ENCODE measurements at regions of chr7 and their contacts with region 1.

Region 1: DNA sequence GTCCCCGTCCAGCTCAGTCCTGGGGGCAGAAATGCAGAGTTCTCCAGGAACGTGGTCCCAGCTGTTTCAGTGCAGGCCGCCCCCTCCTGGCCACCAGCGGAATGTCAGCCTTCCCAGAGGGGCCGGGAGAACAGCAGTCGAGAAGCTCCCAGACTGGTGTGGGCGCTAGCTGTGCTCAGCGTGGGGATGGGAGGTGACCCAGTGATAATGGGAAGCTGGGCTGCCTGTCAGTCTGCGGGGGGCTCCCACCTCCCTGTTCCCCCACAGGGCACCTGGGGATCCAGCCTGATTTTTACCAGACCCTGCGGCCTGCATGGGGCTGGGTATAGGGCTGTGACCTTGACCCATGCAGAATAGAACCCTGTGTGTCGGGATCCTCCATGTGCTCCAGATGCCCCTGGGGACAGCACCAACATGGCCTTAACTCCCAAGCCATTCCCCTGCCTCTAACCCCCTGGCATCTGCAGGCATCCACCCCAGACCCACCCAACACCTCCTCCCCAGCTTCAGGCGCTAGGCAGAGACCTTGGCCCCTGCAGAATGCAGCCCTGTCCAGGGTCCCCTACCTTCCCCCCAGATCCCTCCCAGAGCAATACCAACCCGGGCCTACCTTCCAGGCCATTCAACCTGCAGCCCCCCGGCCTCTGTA is 946 bp upstream of the ELN start:
- DNase-seq: no peak
- H3K4me3 ChIP-seq: no peak overlapping the region
- CTCF ChIP-seq: peak; percentile 97

Region 2: DNA sequence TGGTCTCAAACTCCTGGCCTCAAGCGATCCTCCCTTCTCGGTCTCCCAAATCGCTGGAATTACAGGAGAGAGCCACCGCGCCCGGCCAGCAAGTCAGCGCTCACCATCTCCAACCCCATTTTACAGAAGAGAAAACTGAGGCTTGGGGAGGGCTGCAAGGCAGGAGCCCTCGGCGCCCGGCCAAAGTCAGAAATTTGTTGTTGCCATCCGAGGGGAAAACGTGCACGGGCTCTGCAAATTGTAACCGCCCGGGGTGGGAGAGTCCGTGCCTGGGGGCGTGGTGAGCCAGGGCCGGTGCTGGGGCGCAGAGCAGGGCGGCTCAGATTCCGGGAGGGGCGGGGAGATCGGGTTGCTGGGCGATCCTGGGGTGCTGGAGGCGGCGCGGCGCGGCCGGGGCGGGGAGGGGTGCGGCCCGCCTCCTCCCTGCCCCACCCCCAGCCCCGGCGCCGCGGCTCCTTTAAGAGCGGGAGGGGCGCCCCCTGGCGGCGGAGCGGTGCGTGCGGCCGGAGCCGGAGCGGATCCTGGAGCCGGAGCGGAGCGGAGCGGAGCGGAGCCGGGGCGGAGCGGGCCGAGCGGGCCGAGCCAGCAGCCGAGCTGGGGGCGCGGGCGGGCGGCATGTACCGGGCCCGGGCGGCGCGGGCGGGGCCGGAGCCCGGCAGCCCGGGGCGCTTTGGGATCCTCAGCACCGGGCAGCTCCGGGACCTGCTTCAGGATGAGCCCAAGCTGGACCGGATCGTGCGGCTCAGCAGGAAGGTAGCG is 359.5 kb before region 1 on chr7 and contains the start of gene VPS37D:
- CTCF ChIA-PET with region 1: no interaction called
- POLR2A ChIA-PET with region 1: no interaction called
- DNase-seq: peak; percentile 3
- H3K4me3 ChIP-seq: peak within 1 kb of the TSS; percentile 72
- CTCF ChIP-seq: peak; percentile 84

Region 3: GRCh38 chr7:73865738-73866445 is 161.1 kb before region 1 on chr7:
- CTCF ChIA-PET with region 1: interaction called, 67 read pairs
- POLR2A ChIA-PET with region 1: no interaction called
- DNase-seq: no peak
- H3K4me3 ChIP-seq: no peak overlapping the region
- CTCF ChIP-seq: peak; percentile 74

Region 4: GRCh38 chr7:73885975-73886798 is 140.8 kb before region 1 on chr7:
- CTCF ChIA-PET with region 1: interaction called, 27 read pairs
- POLR2A ChIA-PET with region 1: no interaction called
- DNase-seq: no peak
- H3K4me3 ChIP-seq: no peak overlapping the region
- CTCF ChIP-seq: no peak

Region 5: DNA sequence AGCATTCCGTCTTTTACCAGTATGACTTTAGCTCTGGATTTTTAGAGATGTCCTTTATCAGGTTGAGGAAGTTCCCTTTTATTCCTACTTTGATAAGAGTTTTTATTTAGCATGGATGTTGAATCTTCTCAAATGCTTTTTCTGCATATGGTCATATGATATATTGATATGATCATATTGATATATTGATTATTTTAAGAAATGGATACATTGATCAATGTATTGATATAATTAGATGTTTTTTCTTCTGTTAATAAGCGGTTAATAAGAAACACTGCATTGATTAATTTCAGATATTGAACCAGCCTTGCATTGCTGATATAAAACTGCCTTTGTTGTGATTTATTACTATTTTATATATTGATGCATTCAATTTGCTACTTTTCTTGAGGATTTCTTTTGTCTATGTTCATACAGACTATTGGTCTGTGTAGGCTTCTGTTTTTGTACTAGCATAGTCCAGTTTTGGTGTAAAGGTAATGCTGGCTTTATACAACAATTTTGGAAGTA is 78.8 kb before region 1 on chr7:
- CTCF ChIA-PET with region 1: no interaction called
- POLR2A ChIA-PET with region 1: no interaction called
- DNase-seq: no peak
- H3K4me3 ChIP-seq: no peak overlapping the region
- CTCF ChIP-seq: no peak

Region 6: GRCh38 chr7:73999615-74000420 is 27.2 kb before region 1 on chr7:
- CTCF ChIA-PET with region 1: interaction called, 24 read pairs
- POLR2A ChIA-PET with region 1: no interaction called
- DNase-seq: peak; percentile 86
- H3K4me3 ChIP-seq: no peak overlapping the region
- CTCF ChIP-seq: no peak

Region 7: DNA sequence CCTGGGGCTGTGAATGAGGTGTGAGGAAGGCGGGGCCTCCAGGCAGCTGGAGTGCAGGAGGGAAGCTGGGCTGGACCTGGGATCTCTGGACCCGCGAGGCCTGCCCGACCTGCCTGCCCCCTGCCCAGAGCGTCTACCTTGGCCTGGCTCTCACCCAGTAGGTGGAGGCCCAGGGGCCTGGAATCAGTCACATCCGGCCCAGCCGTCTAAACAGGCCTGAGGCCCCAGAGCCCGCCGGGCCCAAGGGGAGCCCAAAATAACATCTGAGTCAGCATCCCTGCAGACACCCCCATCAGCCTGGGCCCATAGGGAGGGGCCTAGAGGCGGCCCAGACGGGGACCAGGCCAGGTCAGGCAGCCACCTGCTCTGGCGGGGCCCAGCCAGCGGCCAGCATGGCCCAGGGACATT is 14.2 kb before region 1 on chr7:
- CTCF ChIA-PET with region 1: interaction called, 147 read pairs
- POLR2A ChIA-PET with region 1: no interaction called
- DNase-seq: no peak
- H3K4me3 ChIP-seq: no peak overlapping the region
- CTCF ChIP-seq: no peak

Region 8: DNA sequence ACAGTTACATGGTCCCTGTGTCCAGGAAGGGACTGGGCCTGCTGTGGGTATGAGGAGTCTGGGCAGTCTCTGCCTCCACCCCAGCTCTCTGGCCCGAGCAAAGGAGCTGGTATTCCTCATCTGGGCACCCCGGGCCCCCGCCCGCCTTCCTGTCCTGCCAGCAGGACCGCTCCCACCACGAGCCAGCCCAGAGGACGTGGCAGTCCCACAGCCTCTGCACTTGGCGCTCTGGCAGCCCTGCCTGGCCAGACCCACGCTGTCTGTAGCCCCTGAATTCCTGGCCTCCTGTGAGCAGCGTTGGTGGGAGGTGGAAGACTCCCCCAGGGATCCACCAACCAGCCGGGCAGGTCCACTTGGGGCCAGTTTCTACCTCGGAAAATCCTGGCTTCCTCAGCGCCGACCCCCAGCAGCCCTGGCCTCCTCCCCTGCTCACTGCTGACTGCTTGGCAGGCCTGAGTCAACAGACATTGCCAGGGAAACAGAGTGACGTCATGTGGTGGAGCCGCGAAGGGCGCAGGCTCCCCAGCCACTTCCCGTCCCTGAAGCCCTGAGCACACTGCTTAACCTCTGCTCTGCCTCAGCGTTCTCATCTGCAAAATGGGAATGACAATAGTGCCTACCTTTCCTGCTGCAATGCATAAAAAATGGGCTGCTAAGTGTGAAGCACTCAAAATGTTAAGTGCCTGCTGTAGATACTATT is 35.0 kb after region 1 on chr7:
- CTCF ChIA-PET with region 1: interaction called, 19 read pairs
- POLR2A ChIA-PET with region 1: no interaction called
- DNase-seq: no peak
- H3K4me3 ChIP-seq: peak overlapping the region; percentile 12; the same call in 1 of the 2 replicates
- CTCF ChIP-seq: no peak